A673 (cell line): ENCODE measurements at regions of chrX and their contacts with region 1.

Region 1: GRCh38 chrX:19535476-19535875 is 20.2 kb upstream of the MAP3K15 start:
- DNase-seq: peak; percentile 51
- H3K4me3 ChIP-seq: no peak overlapping the region
- H3K27ac ChIP-seq: no peak overlapping the region
- H3K4me1 ChIP-seq: no peaks in the 10 kb centered on the region
- H3K27me3 ChIP-seq: no peaks in the 10 kb centered on the region
- CTCF ChIP-seq: peak; percentile 55

Region 2: GRCh38 chrX:19372170-19372546 is 163.3 kb before region 1 on chrX:
- CTCF ChIA-PET with region 1: interaction called, 17 read pairs
- POLR2A ChIA-PET with region 1: interaction called, 3 read pairs
- intact Hi-C with region 1: loop called (anchors 1 kb)
- DNase-seq: peak; percentile 81
- H3K4me3 ChIP-seq: peak overlapping the region; percentile 39
- H3K27ac ChIP-seq: no peak overlapping the region
- H3K4me1 ChIP-seq: no peaks in the 10 kb centered on the region
- H3K27me3 ChIP-seq: peaks cover 6% of the 10 kb centered on the region
- CTCF ChIP-seq: peak; percentile 90

Region 3: DNA sequence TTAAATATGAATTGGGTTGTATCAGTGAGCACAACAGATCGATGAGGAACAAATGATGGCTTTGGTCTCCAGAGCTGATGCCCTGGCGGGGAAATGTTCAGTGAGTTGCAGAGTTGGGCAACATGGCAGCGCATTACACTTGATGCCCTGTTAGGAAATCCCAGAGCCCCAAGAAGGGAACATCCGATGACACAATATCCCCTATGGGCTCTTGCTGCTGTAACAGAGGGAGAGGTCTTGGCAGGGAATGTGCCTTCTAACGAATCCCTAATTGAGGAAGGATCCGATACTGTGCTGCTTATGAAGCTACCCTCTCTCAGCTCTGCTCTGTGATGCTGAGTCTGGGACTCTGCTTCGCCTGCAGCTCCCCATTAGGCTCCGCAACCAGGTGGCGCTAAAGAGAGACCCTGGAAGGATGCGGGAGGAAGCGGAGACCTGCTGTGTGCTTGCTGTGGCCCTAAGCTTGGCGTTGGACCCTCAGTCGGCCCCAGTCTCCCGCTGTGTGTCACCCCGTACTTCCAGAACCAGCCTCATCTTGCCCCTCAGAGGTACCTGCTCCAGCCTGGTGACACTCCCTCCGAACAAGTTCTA is 152.8 kb before region 1 on chrX:
- CTCF ChIA-PET with region 1: interaction called, 12 read pairs
- POLR2A ChIA-PET with region 1: no interaction called
- intact Hi-C with region 1: loop called (anchors 2 kb)
- DNase-seq: peak; percentile 71
- H3K4me3 ChIP-seq: no peak overlapping the region
- H3K27ac ChIP-seq: no peak overlapping the region
- H3K4me1 ChIP-seq: no peaks in the 10 kb centered on the region
- H3K27me3 ChIP-seq: peaks cover 10% of the 10 kb centered on the region
- CTCF ChIP-seq: peak; percentile 80

Region 4: GRCh38 chrX:19479458-19479857 is 56.0 kb before region 1 on chrX:
- CTCF ChIA-PET with region 1: interaction called, 11 read pairs
- POLR2A ChIA-PET with region 1: no interaction called
- intact Hi-C with region 1: no loop called
- DNase-seq: no peak
- H3K4me3 ChIP-seq: no peak overlapping the region
- H3K27ac ChIP-seq: no peak overlapping the region
- H3K4me1 ChIP-seq: no peaks in the 10 kb centered on the region
- H3K27me3 ChIP-seq: no peaks in the 10 kb centered on the region
- CTCF ChIP-seq: no peak

Region 5: DNA sequence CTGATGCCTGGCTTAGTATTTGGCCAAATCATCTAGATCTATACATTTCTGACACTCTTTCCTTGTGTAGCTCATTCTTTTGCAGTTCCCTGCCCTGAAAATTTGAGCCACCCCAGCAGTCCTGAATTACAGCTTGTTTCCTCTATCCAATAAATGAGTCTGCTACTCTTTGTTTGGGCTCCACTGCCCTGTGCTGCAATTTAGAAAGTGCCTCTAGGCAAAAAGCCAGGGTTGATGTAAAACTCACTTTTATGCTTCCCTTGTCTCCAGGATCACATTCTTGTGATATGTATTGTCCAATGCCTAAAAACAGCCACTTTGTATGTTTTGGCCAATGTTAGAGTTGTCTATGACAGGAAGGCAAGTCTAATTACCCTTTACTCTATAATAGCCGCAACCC is 81.5 kb after region 1 on chrX:
- CTCF ChIA-PET with region 1: no interaction called
- POLR2A ChIA-PET with region 1: no interaction called
- intact Hi-C with region 1: no loop called
- DNase-seq: no peak
- H3K4me3 ChIP-seq: no peak overlapping the region
- H3K27ac ChIP-seq: no peak overlapping the region
- H3K4me1 ChIP-seq: no peaks in the 10 kb centered on the region
- H3K27me3 ChIP-seq: no peaks in the 10 kb centered on the region
- CTCF ChIP-seq: no peak